CD8-positive, alpha-beta T cell (primary cell): ENCODE measurements at regions of chr10 and their contacts with region 1.

Region 1: DNA sequence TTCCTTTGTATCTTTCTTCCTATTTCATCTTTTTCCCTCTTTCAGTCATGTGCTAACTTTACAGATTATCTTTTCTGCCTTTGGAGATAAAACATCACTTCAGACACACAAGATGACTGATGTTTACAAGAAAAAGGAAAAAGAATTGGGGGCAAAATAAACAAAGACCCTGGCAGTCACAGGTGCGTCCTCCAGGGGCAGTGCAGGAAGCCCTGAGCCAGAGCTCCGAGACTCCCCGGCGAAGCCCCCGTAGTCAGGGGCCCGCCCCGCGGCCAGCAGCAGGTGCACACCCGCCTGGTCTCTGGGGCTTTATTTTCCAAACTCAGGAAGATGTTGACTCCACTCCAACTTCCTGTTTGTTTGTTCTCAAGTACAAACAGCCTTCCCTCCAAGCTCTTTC is 10.2 kb downstream of the STK32C start:
- DNase-seq: no peak
- ATAC-seq: peak; percentile 56
- H3K4me3 ChIP-seq: no peak overlapping the region
- H3K4me3 Mint-ChIP-seq: no peak overlapping the region
- H3K27ac ChIP-seq: no peak overlapping the region
- H3K27ac Mint-ChIP-seq: no peak overlapping the region
- H3K4me1 ChIP-seq: no peaks in the 10 kb centered on the region
- H3K4me1 Mint-ChIP-seq: peaks cover 7% of the 10 kb centered on the region
- H3K27me3 ChIP-seq: no peaks in the 10 kb centered on the region
- H3K27me3 Mint-ChIP-seq: no peaks in the 10 kb centered on the region
- CTCF ChIP-seq: no peak

Region 2: DNA sequence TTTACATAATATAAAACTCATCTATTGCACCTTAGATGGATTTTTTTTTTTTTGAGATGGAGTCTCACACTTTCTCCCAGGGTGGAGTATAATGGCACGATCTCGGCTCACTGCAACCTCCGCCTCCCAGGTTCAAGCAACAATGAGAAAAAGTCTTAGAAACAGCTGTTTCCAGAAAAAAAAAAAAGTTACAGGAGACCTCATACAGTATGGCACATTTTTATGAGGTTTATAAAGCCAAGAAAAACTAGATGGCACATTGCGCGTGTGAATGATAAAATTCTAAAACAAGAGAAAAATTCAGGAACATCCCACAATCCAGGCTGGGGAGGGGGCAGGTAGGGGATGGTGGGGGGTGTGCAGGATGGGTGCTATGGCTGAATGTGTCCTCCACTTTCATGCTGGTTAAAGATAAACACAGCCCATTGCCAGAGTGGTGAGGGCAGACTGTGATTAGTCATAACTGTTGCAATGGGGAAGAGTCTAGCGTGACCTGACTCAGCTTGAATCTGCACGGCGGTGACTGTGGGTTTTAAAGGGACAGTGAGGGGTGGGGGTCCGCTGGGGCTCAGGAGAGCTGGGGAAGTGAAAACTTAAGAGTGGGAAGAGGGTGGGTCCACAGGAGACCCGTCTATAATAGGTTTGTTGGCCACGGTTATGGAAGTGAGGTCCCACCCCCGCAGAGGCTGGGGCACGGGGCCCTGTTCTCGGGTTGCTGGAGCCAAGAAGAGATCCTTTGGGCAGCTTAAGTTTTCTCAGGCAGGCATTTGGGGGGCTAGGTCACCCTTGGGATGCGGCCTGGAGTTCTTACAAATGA is 22.5 kb after region 1 on chr10:
- CTCF ChIA-PET with region 1: no interaction called
- POLR2A ChIA-PET with region 1: no interaction called
- intact Hi-C with region 1: loop called in 1 of 2 experiments (anchors 1 kb)
- DNase-seq: no peak
- ATAC-seq: no peak
- H3K4me3 ChIP-seq: no peak overlapping the region
- H3K4me3 Mint-ChIP-seq: no peak overlapping the region
- H3K27ac ChIP-seq: no peak overlapping the region
- H3K27ac Mint-ChIP-seq: no peak overlapping the region
- H3K4me1 ChIP-seq: no peaks in the 10 kb centered on the region
- H3K4me1 Mint-ChIP-seq: peaks cover 6% of the 10 kb centered on the region
- H3K27me3 ChIP-seq: no peaks in the 10 kb centered on the region
- H3K27me3 Mint-ChIP-seq: no peaks in the 10 kb centered on the region
- CTCF ChIP-seq: no peak